ENCODE measurements at regions of chr3 and their contacts with region 1.

Region 1: DNA sequence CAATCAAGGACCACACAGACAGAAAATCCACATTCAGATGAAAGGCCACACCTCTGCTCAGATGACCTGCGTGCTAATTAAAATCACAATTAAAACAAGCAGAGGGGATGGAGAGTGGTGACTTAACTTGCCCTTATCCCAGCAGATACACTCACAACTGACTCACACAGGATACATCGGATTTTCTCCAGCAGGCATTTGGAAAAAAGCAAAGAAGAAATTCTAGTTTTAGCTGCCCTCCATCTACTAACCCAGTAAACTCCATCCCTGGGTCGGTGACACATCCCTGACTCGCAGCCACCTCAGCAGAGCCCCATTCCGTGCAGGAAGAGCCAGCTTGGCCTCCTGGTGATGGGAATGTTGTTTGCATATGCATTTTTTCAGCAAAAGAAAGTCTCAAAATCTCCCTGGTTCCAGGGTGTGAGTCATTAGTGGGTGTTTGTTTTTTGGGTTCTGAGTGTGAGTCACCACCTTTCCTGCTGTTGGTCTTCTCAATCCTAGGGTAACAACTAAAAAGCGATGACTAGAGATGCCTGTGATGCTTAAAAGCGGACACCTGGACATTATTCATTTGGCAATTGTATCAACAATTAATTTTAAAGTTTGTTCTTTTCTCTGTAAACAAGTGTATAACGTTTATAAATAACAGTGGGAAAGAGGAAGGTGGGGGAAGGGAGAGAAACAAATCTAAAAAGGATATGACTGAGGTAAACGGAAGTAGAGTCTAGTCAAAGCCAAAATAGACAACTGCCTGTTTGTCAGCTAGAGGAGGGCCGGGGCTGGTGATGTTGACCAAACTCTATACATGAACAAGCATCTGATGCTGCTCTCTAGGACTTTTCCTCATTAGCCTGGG is 49.8 kb upstream of the SLC4A7 start:
- DNase-seq: peak in 1 of 9 donors; percentile 24
- ATAC-seq: peak; percentile 88
- H3K4me3 ChIP-seq: peak overlapping the region; percentile 22
- H3K4me3 Mint-ChIP-seq: peak overlapping the region in 3 of 10 donors; percentile 18 to 49 (median 31)
- H3K27ac ChIP-seq: no peak overlapping the region
- H3K27ac Mint-ChIP-seq: peak overlapping the region in 4 of 9 donors; percentile 61 to 89 (median 82)
- H3K4me1 ChIP-seq: peaks cover 0 to 11% of the 10 kb centered on the region in 2 donors
- H3K4me1 Mint-ChIP-seq: peaks cover 8 to 22% (median 11%) of the 10 kb centered on the region in 7 donors
- H3K27me3 ChIP-seq: no peaks in the 10 kb centered on the region
- H3K27me3 Mint-ChIP-seq: no peaks in the 10 kb centered on the region

Region 2: GRCh38 chr3:27596334-27596841 is 62.4 kb after region 1 on chr3:
- CTCF ChIA-PET with region 1: no interaction called
- POLR2A ChIA-PET with region 1: no interaction called
- intact Hi-C with region 1: loop called in 1 of 2 experiments (anchors 10 kb)
- DNase-seq: no peak
- ATAC-seq: no peak
- H3K4me3 ChIP-seq: no peak overlapping the region
- H3K4me3 Mint-ChIP-seq: no peak overlapping the region
- H3K27ac ChIP-seq: no peak overlapping the region
- H3K27ac Mint-ChIP-seq: no peak overlapping the region
- H3K4me1 ChIP-seq: peaks cover 7% of the 10 kb centered on the region in 2 donors
- H3K4me1 Mint-ChIP-seq: peaks cover 7 to 25% (median 14%) of the 10 kb centered on the region in 7 donors
- H3K27me3 ChIP-seq: no peaks in the 10 kb centered on the region
- H3K27me3 Mint-ChIP-seq: no peaks in the 10 kb centered on the region

Region 3: GRCh38 chr3:27644941-27645340 is 111.0 kb after region 1 on chr3:
- CTCF ChIA-PET with region 1: no interaction called
- POLR2A ChIA-PET with region 1: interaction called, 3 read pairs
- intact Hi-C with region 1: loop called in 1 of 2 experiments (anchors 5 kb)
- DNase-seq: no peak
- ATAC-seq: no peak
- H3K4me3 ChIP-seq: no peak overlapping the region
- H3K4me3 Mint-ChIP-seq: no peak overlapping the region
- H3K27ac ChIP-seq: no peak overlapping the region
- H3K27ac Mint-ChIP-seq: no peak overlapping the region
- H3K4me1 ChIP-seq: peaks cover 1 to 6% of the 10 kb centered on the region in 2 donors
- H3K4me1 Mint-ChIP-seq: peaks cover 0 to 8% (median 4%) of the 10 kb centered on the region in 7 donors
- H3K27me3 ChIP-seq: no peaks in the 10 kb centered on the region
- H3K27me3 Mint-ChIP-seq: peaks cover 0 to 18% (median 0%) of the 10 kb centered on the region in 5 donors

Measured in naive thymus-derived CD4-positive, alpha-beta T cell (primary cell).